ENCODE measurements at regions of chr3 and their contacts with region 1.

Region 1: GRCh38 chr3:112990672-112991602 is at the start of gene GTPBP8:
- DNase-seq: peak; percentile 90
- H3K4me3 ChIP-seq: peak within 1 kb of the TSS; percentile 90
- H3K27ac ChIP-seq: peak within 1 kb of the TSS; percentile 86
- H3K4me1 ChIP-seq: peaks cover 33% of the 10 kb centered on the region
- CTCF ChIP-seq: no peak
- total RNA-seq, gene GTPBP8: 17.6 and 23.8 TPM in 2 replicates

Region 2: GRCh38 chr3:113002679-113003078 is 11.7 kb after region 1 on chr3:
- CTCF ChIA-PET with region 1: no interaction called
- POLR2A ChIA-PET with region 1: interaction called, 22 read pairs
- intact Hi-C with region 1: no loop called
- DNase-seq: peak; percentile 8
- H3K4me3 ChIP-seq: no peak overlapping the region
- H3K27ac ChIP-seq: no peak overlapping the region
- H3K4me1 ChIP-seq: peaks cover 11% of the 10 kb centered on the region
- CTCF ChIP-seq: no peak

Region 3: DNA sequence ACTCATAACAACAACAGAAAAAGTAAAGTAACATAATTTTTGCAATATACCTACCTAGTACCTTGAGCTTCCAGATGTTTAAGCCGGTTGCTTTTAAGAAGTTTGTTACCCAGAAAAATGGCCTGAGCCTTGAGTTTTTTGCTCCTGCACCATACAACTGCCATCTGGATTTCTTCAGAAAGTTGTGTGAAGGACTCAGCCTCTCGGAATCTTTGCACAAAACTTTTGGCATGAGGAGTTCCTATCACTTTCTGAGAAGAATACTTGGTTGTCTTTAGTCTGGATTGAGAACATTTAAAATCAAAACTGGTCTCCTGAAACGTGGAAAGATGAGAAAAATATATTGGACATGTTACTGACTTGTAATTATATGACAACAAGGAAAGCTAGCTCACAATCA is 17.2 kb after region 1 on chr3:
- CTCF ChIA-PET with region 1: no interaction called
- POLR2A ChIA-PET with region 1: interaction called, 22 read pairs
- intact Hi-C with region 1: no loop called
- DNase-seq: no peak
- H3K4me3 ChIP-seq: no peak overlapping the region
- H3K27ac ChIP-seq: no peak overlapping the region
- H3K4me1 ChIP-seq: no peaks in the 10 kb centered on the region
- CTCF ChIP-seq: no peak

Region 4: DNA sequence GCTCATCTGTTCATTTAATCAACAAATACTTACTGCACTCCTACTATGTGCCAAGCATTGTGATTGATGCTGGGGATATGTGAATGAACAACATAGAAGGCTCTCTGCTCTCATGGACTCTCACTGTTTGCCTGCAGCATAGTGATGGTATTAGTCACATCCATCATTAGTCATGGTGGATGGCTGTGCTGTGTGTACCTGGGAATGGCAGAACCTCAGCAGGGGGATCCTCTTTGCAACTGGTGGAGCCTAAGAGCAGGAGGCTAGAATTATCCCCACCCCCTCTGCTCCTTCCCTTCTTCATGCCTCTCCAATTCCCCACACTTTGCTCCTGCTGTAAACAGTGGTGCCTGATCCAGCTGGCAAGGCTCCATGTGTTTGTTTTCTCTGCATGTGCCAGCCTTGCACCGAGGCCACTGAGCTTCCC is 240.9 kb after region 1 on chr3:
- CTCF ChIA-PET with region 1: no interaction called
- POLR2A ChIA-PET with region 1: no interaction called
- intact Hi-C with region 1: no loop called
- DNase-seq: no peak
- H3K4me3 ChIP-seq: no peak overlapping the region
- H3K27ac ChIP-seq: no peak overlapping the region
- H3K4me1 ChIP-seq: no peaks in the 10 kb centered on the region
- CTCF ChIP-seq: no peak

Measured in OCI-LY7 (cell line).